Heart left ventricle (tissue), 16 donors: ENCODE measurements at regions of chr14 and their contacts with region 1.

Region 1: DNA sequence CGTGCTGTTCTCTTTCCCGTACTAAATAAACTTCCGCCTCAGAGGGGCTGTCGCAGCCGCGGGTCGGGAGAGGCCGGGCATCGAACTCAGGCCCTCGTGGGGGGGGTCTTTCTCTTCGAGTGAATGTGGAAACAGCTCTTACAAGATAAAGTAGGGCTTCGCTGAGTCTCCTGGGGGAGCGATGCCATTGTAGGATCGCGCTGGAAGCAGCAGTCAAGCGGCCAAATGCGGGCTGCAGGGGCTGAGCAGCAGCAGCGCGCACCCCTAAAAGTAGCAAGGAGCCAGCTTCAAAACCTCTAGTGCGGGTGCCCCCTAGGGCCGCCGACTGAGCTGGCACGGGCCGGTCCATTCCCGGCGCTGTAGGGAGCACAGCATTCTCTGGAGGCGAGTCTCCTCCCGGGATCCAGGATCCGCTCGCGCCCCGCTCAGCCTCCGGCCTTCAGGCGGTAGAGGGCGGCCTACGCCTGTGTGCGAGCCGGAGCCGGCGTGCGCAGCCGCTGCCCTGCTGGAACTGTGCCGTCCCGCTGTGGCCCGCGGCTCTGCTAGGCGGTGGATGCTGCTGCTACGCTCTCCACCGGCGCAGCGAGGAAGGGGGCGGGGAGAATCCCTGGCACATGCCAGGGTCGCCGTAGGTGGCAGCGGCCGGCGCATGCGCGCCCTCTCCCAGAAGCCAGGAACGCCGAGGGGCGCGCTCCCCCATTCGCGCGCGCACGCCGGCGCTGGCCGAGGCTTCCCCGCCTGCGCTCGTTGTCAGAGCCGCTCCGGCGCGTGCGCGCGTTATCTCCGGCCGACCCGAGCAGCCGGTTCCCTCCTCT is at the start of gene FUT8:
- DNase-seq: peak; percentile 95 to 98 (median 96)
- ATAC-seq: peak; percentile 93 to 96 (median 94)
- H3K4me3 ChIP-seq: peak within 1 kb of the TSS; percentile 70 to 94 (median 81)
- H3K27ac ChIP-seq: peak within 1 kb of the TSS; percentile 76 to 96 (median 90)
- H3K4me1 ChIP-seq: peaks cover 0 to 21% (median 10%) of the 10 kb centered on the region in 12 donors
- H3K27me3 ChIP-seq: no peaks in the 10 kb centered on the region
- CTCF ChIP-seq: peak; percentile 43 to 78 (median 60)
- POLR2A ChIP-seq: peak in 1 of 2 donors; percentile 83
- total RNA-seq, gene FUT8: 10.2 to 17.3 (median 12.4) TPM

Region 2: GRCh38 chr14:64986578-64987571 is 425.4 kb before region 1 on chr14 and contains the start of gene FNTB:
- intact Hi-C with region 1: loop called in 2 of 10 experiments (anchors 2 to 5 kb)
- DNase-seq: peak; percentile 95 to 98 (median 98)
- ATAC-seq: peak; percentile 98 to 99 (median 99)
- H3K4me3 ChIP-seq: peak within 1 kb of the TSS; percentile 66 to 93 (median 80)
- H3K27ac ChIP-seq: peak within 1 kb of the TSS; percentile 60 to 94 (median 87)
- H3K4me1 ChIP-seq: peaks cover 0 to 41% (median 14%) of the 10 kb centered on the region in 12 donors
- H3K27me3 ChIP-seq: no peaks in the 10 kb centered on the region
- CTCF ChIP-seq: peak; percentile 56 to 97 (median 80)
- POLR2A ChIP-seq: peak in 1 of 2 donors; percentile 53
- total RNA-seq, gene FNTB: 13.0 to 20.8 (median 16.7) TPM

Region 3: GRCh38 chr14:65164068-65164824 is 248.0 kb before region 1 on chr14:
- intact Hi-C with region 1: loop called in 8 of 10 experiments (anchors 2 to 10 kb)
- DNase-seq: no peak
- ATAC-seq: peak in 3 of 4 donors; percentile 47 to 59 (median 48)
- H3K4me3 ChIP-seq: no peak overlapping the region
- H3K27ac ChIP-seq: no peak overlapping the region
- H3K4me1 ChIP-seq: peaks cover 0 to 2% (median 0%) of the 10 kb centered on the region in 12 donors
- H3K27me3 ChIP-seq: no peaks in the 10 kb centered on the region
- CTCF ChIP-seq: peak; percentile 45 to 81 (median 64)
- POLR2A ChIP-seq: no peak

Region 4: GRCh38 chr14:65222440-65222858 is 189.8 kb before region 1 on chr14:
- intact Hi-C with region 1: loop called (anchors 2 to 10 kb)
- DNase-seq: peak; percentile 31 to 72 (median 42)
- ATAC-seq: peak; percentile 32 to 79 (median 76)
- H3K4me3 ChIP-seq: no peak overlapping the region
- H3K27ac ChIP-seq: no peak overlapping the region
- H3K4me1 ChIP-seq: peaks cover 0 to 33% (median 2%) of the 10 kb centered on the region in 12 donors
- H3K27me3 ChIP-seq: no peaks in the 10 kb centered on the region
- CTCF ChIP-seq: peak; percentile 65 to 83 (median 76)
- POLR2A ChIP-seq: no peak

Region 5: GRCh38 chr14:65239143-65239937 is 172.9 kb before region 1 on chr14:
- intact Hi-C with region 1: loop called in 1 of 10 experiments (anchors 5 kb)
- DNase-seq: peak in 1 of 5 donors; percentile 31
- ATAC-seq: peak in 3 of 4 donors; percentile 27 to 43 (median 30)
- H3K4me3 ChIP-seq: no peak overlapping the region
- H3K27ac ChIP-seq: peak overlapping the region in 4 of 12 donors; percentile 24 to 68 (median 34)
- H3K4me1 ChIP-seq: peaks cover 0 to 26% (median 4%) of the 10 kb centered on the region in 12 donors
- H3K27me3 ChIP-seq: no peaks in the 10 kb centered on the region
- CTCF ChIP-seq: no peak
- POLR2A ChIP-seq: no peak

Region 6: DNA sequence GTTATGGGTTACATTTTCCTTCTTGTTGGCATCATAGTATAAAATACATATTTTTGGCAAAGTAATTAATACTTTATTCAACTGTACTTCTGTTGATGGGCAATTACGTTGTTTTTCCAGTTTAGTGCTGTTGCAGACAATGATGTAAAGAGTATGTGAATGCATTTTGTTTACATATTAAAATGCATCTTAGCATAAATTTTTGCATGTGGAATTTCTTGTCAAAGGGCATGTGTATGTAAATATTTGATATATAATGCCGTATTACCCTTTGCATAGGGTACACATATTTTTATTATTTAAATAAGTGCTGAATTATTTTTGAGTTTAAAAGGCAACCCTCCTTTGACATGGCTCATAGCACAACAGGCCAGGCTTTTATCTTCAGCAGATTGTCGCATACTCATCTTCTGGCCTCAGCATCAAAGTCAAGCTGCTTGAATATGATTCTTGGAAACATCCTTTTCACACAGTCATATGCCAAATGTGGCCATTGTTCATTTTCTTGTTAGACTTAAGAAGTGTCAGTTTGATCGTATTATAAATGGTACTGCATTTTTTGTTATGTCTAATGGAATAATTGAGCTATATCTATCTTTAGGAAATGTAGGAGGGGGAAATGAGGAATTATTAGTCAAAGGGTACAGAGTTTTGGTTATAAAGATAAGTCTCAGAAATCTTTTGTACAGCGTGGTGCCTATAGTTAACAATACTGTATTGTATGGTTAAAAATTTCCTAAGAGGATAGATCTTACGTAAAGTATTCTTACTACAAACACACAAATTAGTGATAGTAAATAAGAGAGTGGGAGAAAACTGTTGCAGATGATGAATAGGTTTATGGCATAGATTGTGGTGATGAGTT is 138.8 kb after region 1 on chr14:
- intact Hi-C with region 1: no loop called
- DNase-seq: no peak
- ATAC-seq: no peak
- H3K4me3 ChIP-seq: no peak overlapping the region
- H3K27ac ChIP-seq: no peak overlapping the region
- H3K4me1 ChIP-seq: no peaks in the 10 kb centered on the region
- H3K27me3 ChIP-seq: no peaks in the 10 kb centered on the region
- CTCF ChIP-seq: no peak
- POLR2A ChIP-seq: no peak

Region 7: GRCh38 chr14:65824285-65824977 is 412.2 kb after region 1 on chr14:
- intact Hi-C with region 1: loop called (anchors 1 to 5 kb)
- DNase-seq: peak in 2 of 5 donors; percentile 30 to 41
- ATAC-seq: peak in 3 of 4 donors; percentile 76 to 82 (median 80)
- H3K4me3 ChIP-seq: no peak overlapping the region
- H3K27ac ChIP-seq: no peak overlapping the region
- H3K4me1 ChIP-seq: no peaks in the 10 kb centered on the region
- H3K27me3 ChIP-seq: peaks cover 0 to 12% (median 6%) of the 10 kb centered on the region in 9 donors
- CTCF ChIP-seq: peak; percentile 86 to 96 (median 90)
- POLR2A ChIP-seq: no peak

Region 8: GRCh38 chr14:66070509-66071319 is 658.5 kb after region 1 on chr14:
- intact Hi-C with region 1: loop called in 3 of 10 experiments (anchors 5 to 10 kb)
- DNase-seq: peak in 2 of 5 donors; percentile 18 to 34
- ATAC-seq: peak in 3 of 4 donors; percentile 49 to 67 (median 58)
- H3K4me3 ChIP-seq: no peak overlapping the region
- H3K27ac ChIP-seq: no peak overlapping the region
- H3K4me1 ChIP-seq: no peaks in the 10 kb centered on the region
- H3K27me3 ChIP-seq: peaks cover 0 to 4% (median 0%) of the 10 kb centered on the region in 9 donors
- CTCF ChIP-seq: peak; percentile 63 to 85 (median 76)
- POLR2A ChIP-seq: no peak